ENCODE measurements at regions of chr18 and their contacts with region 1.

Region 1: GRCh38 chr18:68660354-68661183 is 54.3 kb downstream of the TMX3 start:
- DNase-seq: peak; percentile 61
- H3K4me3 Mint-ChIP-seq: no peak overlapping the region
- H3K27ac Mint-ChIP-seq: no peak overlapping the region
- H3K4me1 Mint-ChIP-seq: no peaks in the 10 kb centered on the region
- H3K27me3 Mint-ChIP-seq: no peaks in the 10 kb centered on the region
- CTCF ChIP-seq: peak; percentile 48

Region 2: GRCh38 chr18:67104700-67105284 is 1555.8 kb before region 1 on chr18:
- CTCF ChIA-PET with region 1: no interaction called
- POLR2A ChIA-PET with region 1: no interaction called
- intact Hi-C with region 1: loop called (anchors 10 kb)
- DNase-seq: peak; percentile 76
- H3K4me3 Mint-ChIP-seq: no peak overlapping the region
- H3K27ac Mint-ChIP-seq: no peak overlapping the region
- H3K4me1 Mint-ChIP-seq: no peaks in the 10 kb centered on the region
- H3K27me3 Mint-ChIP-seq: peaks cover 83% of the 10 kb centered on the region
- CTCF ChIP-seq: peak; percentile 68

Region 3: GRCh38 chr18:68548904-68549871 is 111.4 kb before region 1 on chr18:
- CTCF ChIA-PET with region 1: no interaction called
- POLR2A ChIA-PET with region 1: no interaction called
- intact Hi-C with region 1: no loop called
- DNase-seq: peak; percentile 8
- H3K4me3 Mint-ChIP-seq: no peak overlapping the region
- H3K27ac Mint-ChIP-seq: no peak overlapping the region
- H3K4me1 Mint-ChIP-seq: peaks cover 6% of the 10 kb centered on the region
- H3K27me3 Mint-ChIP-seq: no peaks in the 10 kb centered on the region
- CTCF ChIP-seq: no peak

Region 4: DNA sequence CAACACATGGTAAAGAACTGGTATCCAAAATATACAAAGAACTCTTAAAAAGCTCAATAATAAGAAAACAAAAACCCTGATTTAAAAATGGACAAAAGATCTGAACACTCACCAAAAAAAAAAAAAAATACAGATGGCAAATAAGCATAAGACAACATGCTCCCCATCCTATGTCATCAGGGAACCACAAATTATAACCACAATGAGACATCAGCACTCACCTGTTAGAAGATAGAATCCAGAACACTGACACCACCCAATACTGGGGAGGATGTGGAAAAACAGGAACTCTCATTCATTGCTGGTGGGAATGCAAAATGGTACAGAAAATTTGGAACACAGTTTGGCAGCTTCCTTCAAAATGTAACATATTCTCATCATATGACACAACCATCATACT is 12.4 kb before region 1 on chr18:
- CTCF ChIA-PET with region 1: interaction called, 18 read pairs
- POLR2A ChIA-PET with region 1: no interaction called
- intact Hi-C with region 1: no loop called
- DNase-seq: no peak
- H3K4me3 Mint-ChIP-seq: no peak overlapping the region
- H3K27ac Mint-ChIP-seq: no peak overlapping the region
- H3K4me1 Mint-ChIP-seq: peaks cover 5% of the 10 kb centered on the region
- H3K27me3 Mint-ChIP-seq: no peaks in the 10 kb centered on the region
- CTCF ChIP-seq: no peak

Region 5: GRCh38 chr18:68735483-68736343 is 75.1 kb after region 1 on chr18:
- CTCF ChIA-PET with region 1: no interaction called
- POLR2A ChIA-PET with region 1: no interaction called
- intact Hi-C with region 1: loop called (anchors 2 kb)
- DNase-seq: peak; percentile 70
- H3K4me3 Mint-ChIP-seq: no peak overlapping the region
- H3K27ac Mint-ChIP-seq: no peak overlapping the region
- H3K4me1 Mint-ChIP-seq: peaks cover 15% of the 10 kb centered on the region
- H3K27me3 Mint-ChIP-seq: no peaks in the 10 kb centered on the region
- CTCF ChIP-seq: peak; percentile 75